Activated CD4-positive, alpha-beta memory T cell treated with anti-CD3 and anti-CD28 coated beads for 36 hours (primary cell): ENCODE measurements at regions of chr3 and their contacts with region 1.

Region 1: DNA sequence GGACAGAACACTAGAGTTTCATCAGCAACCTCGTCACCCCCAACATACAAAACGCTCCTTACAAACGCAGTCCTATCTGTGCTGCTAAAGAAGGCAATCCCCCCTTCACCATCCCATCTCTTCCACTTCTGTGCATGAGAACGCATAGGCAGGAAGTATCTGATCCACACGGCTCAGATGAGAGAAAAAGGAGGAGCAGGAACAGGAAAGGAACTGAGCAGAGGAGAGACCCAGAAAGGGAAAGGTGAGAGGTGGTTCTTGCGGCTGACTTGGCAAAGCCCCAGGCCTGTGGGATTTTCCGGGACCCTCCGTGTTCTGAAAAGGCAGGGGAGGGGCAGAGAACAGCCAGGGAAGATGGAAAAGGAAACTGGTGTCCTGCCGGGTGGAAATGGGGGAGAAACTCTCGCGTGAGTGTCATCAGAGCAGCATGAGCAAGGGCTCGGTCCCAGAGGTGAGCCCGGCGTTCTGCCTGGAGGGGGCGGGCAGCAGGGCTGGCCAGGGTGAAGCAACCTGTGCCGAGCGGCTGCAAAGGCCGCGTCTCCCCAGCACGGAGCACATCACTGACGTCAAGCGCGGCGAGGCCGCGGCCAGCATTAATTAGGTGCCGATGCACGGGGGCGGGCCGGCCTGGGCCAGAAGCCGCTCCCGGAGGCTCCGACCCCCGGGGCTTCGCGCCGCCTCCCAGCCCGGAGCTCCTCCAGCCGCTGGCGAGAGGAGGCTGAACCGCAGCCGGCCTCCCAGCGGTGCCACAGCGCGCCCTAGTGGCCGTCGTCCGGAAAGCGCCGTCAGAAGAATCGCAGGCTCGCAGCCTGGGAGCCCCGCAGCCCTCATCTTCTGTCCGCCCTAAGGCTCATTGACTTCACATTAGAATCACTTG is 35.8 kb downstream of the CPN2 start:
- DNase-seq: peak; percentile 88
- H3K4me3 Mint-ChIP-seq: peak overlapping the region; percentile 59
- H3K27ac Mint-ChIP-seq: no peak overlapping the region
- H3K4me1 Mint-ChIP-seq: peaks cover 5% of the 10 kb centered on the region
- H3K27me3 Mint-ChIP-seq: peaks cover 27% of the 10 kb centered on the region

Region 2: DNA sequence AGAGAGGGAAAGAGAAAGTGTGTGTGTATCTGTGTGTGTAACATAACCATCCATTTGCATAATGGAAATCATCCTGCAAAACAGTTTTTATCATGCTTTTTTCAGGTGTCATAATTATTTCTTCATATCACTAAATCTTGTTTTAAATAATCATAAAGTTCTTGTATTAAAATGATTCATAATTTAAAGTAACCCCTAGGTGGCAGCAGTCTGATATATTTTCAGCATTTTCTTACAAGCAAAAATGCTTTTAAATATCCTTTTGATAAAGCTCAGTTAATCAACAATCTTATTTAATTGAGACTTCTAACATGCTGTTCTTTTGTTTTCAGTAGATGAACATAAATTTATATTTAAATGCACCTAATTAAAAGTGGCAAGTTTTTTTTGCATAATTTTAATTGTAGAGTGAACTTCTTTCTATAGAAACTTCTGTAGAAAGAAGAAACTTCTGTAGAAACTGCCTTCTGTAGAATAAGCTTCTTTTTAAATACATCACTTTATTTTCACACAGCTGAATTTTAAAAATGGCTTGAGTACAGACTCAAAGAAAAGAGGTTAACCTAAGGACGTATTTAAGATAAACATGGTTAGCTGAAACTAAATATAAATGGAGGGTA is 649.8 kb before region 1 on chr3:
- CTCF ChIA-PET with region 1: interaction called, 77 read pairs
- POLR2A ChIA-PET with region 1: no interaction called
- intact Hi-C with region 1: loop called (anchors 5 kb)
- DNase-seq: no peak
- H3K4me3 Mint-ChIP-seq: no peak overlapping the region
- H3K27ac Mint-ChIP-seq: no peak overlapping the region
- H3K4me1 Mint-ChIP-seq: no peaks in the 10 kb centered on the region
- H3K27me3 Mint-ChIP-seq: no peaks in the 10 kb centered on the region

Region 3: DNA sequence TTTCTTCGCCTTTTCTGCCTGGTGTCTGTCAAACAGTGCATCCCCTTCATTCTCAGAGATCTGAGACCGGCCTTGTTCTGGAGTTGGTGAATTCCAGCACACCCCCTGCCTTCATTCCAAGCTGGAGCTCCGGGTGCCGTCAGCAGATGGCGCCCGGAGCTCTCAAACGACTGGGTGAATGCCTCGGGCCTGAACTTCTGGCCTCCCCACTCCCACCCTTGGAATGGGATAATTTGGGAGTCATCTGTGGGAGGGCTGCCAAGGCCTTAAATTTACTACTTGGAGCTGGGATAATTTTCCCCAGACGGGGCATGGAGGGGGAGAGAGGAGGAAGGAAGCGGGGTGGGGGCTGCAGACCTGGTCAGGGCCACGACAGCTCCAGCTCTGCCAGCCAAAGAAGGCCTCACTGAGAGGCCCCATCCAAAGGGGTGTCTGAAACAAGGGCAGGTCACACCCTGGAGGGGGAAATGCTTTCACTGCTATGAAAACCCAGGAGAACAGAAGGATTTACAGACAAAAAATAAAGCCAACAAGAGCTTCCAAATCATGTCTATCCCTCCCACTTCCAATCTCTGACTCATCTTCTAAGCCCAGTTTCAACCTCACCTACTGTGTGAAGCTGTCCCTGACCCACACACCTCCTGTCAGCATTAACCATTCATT is 534.4 kb before region 1 on chr3:
- CTCF ChIA-PET with region 1: interaction called, 99 read pairs
- POLR2A ChIA-PET with region 1: no interaction called
- intact Hi-C with region 1: loop called (anchors 1 kb)
- DNase-seq: peak; percentile 42
- H3K4me3 Mint-ChIP-seq: no peak overlapping the region
- H3K27ac Mint-ChIP-seq: no peak overlapping the region
- H3K4me1 Mint-ChIP-seq: peaks cover 7% of the 10 kb centered on the region
- H3K27me3 Mint-ChIP-seq: peaks cover 26% of the 10 kb centered on the region

Region 4: GRCh38 chr3:194141415-194142155 is 173.7 kb before region 1 on chr3:
- CTCF ChIA-PET with region 1: interaction called, 17 read pairs
- POLR2A ChIA-PET with region 1: no interaction called
- intact Hi-C with region 1: no loop called
- DNase-seq: peak; percentile 82
- H3K4me3 Mint-ChIP-seq: peak overlapping the region; percentile 64
- H3K27ac Mint-ChIP-seq: peak overlapping the region; percentile 69
- H3K4me1 Mint-ChIP-seq: peaks cover 18% of the 10 kb centered on the region
- H3K27me3 Mint-ChIP-seq: peaks cover 38% of the 10 kb centered on the region

Region 5: DNA sequence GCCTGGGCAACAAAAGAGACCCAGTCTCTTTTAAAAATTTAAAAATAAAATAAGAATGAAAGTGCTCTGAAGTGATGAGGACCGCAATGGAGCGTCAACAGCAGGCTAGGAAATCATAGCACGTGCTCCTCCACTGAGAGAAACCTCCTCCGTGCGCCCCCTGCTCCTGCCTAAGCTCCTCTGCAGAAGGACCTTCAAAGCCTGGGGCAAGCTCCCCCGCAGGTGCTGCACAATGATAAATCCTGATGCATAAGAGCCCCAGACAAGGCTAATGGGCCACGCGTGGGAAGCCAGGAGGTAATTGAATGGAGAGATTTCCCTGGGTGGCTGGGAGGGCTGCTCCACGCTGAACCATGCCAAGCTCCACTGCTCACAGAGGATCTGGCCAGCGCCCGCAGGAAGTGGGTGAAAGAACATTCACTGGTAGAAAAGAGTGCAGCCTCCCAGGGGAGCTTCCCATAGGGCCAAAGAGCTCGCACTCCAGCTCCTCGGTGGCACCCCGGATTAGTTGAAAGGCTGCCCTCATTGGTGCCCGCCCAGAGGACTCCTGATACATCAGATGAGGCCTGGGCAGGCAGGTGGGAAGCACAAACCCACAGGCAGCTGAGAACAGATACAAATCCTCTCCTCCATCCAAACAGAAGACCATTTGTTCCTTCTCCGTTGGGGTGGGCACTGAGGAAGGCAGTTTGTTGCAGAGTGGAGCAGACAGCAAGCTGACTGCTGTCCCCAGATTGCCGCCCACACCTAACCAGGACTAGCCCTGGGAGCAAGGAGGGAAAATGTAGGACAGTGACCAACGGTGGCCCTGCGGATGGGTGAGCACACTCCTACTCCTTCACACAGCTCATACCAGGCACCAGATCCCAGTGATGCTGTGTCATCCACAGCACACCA is 16.7 kb before region 1 on chr3:
- CTCF ChIA-PET with region 1: interaction called, 15 read pairs
- POLR2A ChIA-PET with region 1: no interaction called
- intact Hi-C with region 1: no loop called
- DNase-seq: no peak
- H3K4me3 Mint-ChIP-seq: no peak overlapping the region
- H3K27ac Mint-ChIP-seq: no peak overlapping the region
- H3K4me1 Mint-ChIP-seq: peaks cover 4% of the 10 kb centered on the region
- H3K27me3 Mint-ChIP-seq: peaks cover 3% of the 10 kb centered on the region